Sigmoid colon (tissue), 7 donors: ENCODE measurements at regions of chr3 and their contacts with region 1.

Region 1: GRCh38 chr3:153026026-153026425 is 136.0 kb upstream of the RAP2B start:
- DNase-seq: no peak
- H3K4me3 ChIP-seq: no peak overlapping the region
- H3K27ac ChIP-seq: no peak overlapping the region
- H3K4me1 ChIP-seq: peaks cover 0 to 19% (median 16%) of the 10 kb centered on the region in 4 donors
- H3K27me3 ChIP-seq: no peaks in the 10 kb centered on the region
- CTCF ChIP-seq: peak in 3 of 4 experiments; percentile 44 to 46 (median 45)
- EP300 ChIP-seq: no peak
- POLR2A ChIP-seq: no peak

Region 2: GRCh38 chr3:152944671-152945070 is 81.4 kb before region 1 on chr3:
- intact Hi-C with region 1: no loop called
- DNase-seq: no peak
- H3K4me3 ChIP-seq: no peak overlapping the region
- H3K27ac ChIP-seq: no peak overlapping the region
- H3K4me1 ChIP-seq: no peaks in the 10 kb centered on the region
- H3K27me3 ChIP-seq: no peaks in the 10 kb centered on the region
- CTCF ChIP-seq: no peak
- EP300 ChIP-seq: no peak
- POLR2A ChIP-seq: no peak

Region 3: GRCh38 chr3:153080778-153081240 is 54.8 kb after region 1 on chr3:
- intact Hi-C with region 1: no loop called
- DNase-seq: no peak
- H3K4me3 ChIP-seq: no peak overlapping the region
- H3K27ac ChIP-seq: no peak overlapping the region
- H3K4me1 ChIP-seq: no peaks in the 10 kb centered on the region
- H3K27me3 ChIP-seq: no peaks in the 10 kb centered on the region
- CTCF ChIP-seq: no peak
- EP300 ChIP-seq: no peak
- POLR2A ChIP-seq: no peak

Region 4: GRCh38 chr3:153595186-153595815 is 569.3 kb after region 1 on chr3:
- intact Hi-C with region 1: loop called (anchors 5 kb)
- DNase-seq: no peak
- H3K4me3 ChIP-seq: no peak overlapping the region
- H3K27ac ChIP-seq: no peak overlapping the region
- H3K4me1 ChIP-seq: no peaks in the 10 kb centered on the region
- H3K27me3 ChIP-seq: no peaks in the 10 kb centered on the region
- CTCF ChIP-seq: peak in 3 of 4 experiments; percentile 25 to 38 (median 36)
- EP300 ChIP-seq: no peak
- POLR2A ChIP-seq: no peak